ENCODE measurements at regions of chr16 and their contacts with region 1.

Region 1: DNA sequence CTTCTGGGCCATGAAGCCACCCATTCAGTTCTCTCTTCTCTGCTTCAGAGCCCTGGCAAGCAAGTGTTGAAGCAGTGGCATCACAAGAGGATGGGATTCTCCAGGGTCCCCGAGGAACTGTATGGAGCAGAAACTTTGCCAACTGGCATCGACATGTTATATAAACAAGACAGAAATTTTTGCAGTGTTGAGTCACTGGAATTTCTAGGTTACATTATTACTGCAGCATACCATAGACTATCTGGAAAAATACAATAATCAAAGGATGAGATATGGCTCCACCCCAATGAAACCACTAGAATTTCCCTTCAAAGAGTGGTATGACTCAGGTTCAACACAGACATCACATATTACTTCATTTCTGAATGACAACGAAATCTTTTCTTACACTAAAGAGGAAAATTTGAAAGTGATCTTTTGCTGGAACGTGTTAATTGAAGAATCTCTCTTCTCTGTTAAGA is 343.0 kb upstream of the DYNLRB2 start:
- DNase-seq: peak; percentile 91
- H3K4me3 ChIP-seq: no peak overlapping the region
- H3K27ac ChIP-seq: peak overlapping the region; percentile 93
- H3K4me1 ChIP-seq: peaks cover 18% of the 10 kb centered on the region
- H3K27me3 ChIP-seq: no peaks in the 10 kb centered on the region
- CTCF ChIP-seq: no peak
- POLR2A ChIP-seq: peak; percentile 48

Region 2: DNA sequence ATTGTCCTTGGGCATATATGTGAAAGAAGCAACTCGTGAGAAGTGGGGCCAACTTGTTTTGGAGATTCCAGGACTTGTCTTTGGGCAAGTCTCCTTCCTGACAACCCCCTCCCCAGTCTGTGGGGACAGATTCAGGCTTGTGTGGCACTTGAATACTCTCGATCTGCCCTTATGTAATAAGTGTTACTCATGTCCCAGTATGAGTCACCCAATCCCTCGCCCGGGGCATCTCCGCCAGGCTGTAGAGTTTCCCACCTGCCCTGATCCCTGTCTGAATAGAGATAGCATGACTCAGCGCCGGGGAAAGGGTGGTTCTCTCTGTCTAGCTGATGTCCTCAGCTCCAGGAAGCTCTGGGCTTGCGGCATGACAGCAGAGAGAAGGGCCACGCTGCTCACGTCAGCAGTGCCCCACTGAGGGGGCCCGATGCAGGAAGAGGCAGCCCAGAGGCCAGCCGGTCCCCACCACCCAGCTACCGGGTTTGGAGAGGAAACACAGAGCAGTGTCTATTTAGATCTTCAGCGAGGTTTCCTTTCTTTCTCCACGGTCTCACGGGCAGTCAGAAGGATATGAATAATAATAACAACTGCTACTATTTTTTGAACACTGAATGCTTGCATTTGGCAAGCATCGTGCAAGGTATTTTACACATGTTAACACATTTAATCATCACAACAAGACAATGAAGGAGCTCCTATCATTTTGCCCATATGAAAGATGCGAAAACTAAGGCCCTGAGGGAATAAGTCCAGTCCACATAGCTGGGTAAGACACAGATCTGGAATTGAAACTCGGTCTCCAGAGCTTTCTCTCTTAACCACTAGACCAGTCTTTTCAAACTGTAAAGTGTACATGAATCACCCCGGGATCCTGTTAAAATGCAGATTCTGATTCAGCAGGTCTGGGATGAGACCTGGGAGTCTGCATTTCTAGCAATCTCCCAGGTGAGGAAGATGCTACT is 170.5 kb before region 1 on chr16:
- CTCF ChIA-PET with region 1: no interaction called
- POLR2A ChIA-PET with region 1: no interaction called
- dilution Hi-C with region 1: no loop called
- intact Hi-C with region 1: loop called (anchors 2 kb)
- DNase-seq: peak; percentile 71
- H3K4me3 ChIP-seq: no peak overlapping the region
- H3K27ac ChIP-seq: peak overlapping the region; percentile 25
- H3K4me1 ChIP-seq: peaks cover 13% of the 10 kb centered on the region
- H3K27me3 ChIP-seq: no peaks in the 10 kb centered on the region
- CTCF ChIP-seq: no peak
- POLR2A ChIP-seq: no peak

Region 3: DNA sequence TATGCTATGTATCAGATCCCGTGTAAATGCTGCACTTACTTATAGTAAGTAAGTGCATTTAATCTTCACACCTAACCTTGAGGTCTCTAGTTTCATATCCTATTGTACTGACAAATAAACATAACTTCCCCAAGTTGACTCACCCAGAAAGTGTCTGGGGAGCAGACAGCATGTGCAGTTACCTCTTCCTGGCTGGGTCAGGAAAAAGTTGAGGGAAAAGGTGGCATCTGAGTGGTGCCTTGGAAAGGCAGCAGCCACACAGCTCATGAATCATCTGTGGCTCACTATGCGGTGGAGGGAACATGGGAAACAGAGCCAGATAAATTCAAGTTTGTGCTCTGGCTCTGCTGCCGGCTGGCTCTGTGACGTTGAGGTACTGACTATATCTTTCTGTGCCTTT is 39.0 kb before region 1 on chr16:
- CTCF ChIA-PET with region 1: no interaction called
- POLR2A ChIA-PET with region 1: no interaction called
- dilution Hi-C with region 1: no loop called
- intact Hi-C with region 1: loop called (anchors 2 kb)
- DNase-seq: peak; percentile 82
- H3K4me3 ChIP-seq: no peak overlapping the region
- H3K27ac ChIP-seq: no peak overlapping the region
- H3K4me1 ChIP-seq: peaks cover 16% of the 10 kb centered on the region
- H3K27me3 ChIP-seq: no peaks in the 10 kb centered on the region
- CTCF ChIP-seq: no peak
- POLR2A ChIP-seq: no peak

Region 4: DNA sequence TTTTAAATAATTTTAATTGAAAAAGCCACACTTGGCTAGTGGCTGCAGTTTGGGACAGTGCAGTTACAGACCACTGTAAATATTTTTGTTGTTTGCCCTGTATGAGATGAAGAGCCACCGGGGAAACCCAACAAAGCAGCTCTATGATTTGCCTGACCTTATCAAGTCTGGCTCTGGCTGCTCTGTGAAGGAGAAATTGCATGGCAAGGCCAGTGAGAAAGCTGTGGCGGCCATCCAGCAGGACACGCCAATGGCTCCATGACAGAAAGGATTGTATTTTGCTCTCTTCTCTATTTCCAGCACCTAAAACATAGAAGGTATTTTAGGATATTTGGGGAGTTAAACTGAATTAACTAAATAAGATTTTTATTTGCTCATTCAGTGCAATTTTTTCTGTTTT is 13.0 kb after region 1 on chr16:
- CTCF ChIA-PET with region 1: no interaction called
- POLR2A ChIA-PET with region 1: no interaction called
- dilution Hi-C with region 1: no loop called
- intact Hi-C with region 1: no loop called
- DNase-seq: no peak
- H3K4me3 ChIP-seq: no peak overlapping the region
- H3K27ac ChIP-seq: no peak overlapping the region
- H3K4me1 ChIP-seq: no peaks in the 10 kb centered on the region
- H3K27me3 ChIP-seq: no peaks in the 10 kb centered on the region
- CTCF ChIP-seq: no peak
- POLR2A ChIP-seq: no peak

Region 5: GRCh38 chr16:80299390-80299761 is 101.6 kb after region 1 on chr16:
- CTCF ChIA-PET with region 1: no interaction called
- POLR2A ChIA-PET with region 1: no interaction called
- dilution Hi-C with region 1: no loop called
- intact Hi-C with region 1: loop called (anchors 2 kb)
- DNase-seq: no peak
- H3K4me3 ChIP-seq: no peak overlapping the region
- H3K27ac ChIP-seq: no peak overlapping the region
- H3K4me1 ChIP-seq: peaks cover 17% of the 10 kb centered on the region
- H3K27me3 ChIP-seq: no peaks in the 10 kb centered on the region
- CTCF ChIP-seq: no peak
- POLR2A ChIP-seq: no peak